Ascending aorta (tissue), 2 donors: ENCODE measurements at regions of chr12 and their contacts with region 1.

Region 1: GRCh38 chr12:50504798-50505385 is at the start of gene DIP2B:
- DNase-seq: peak; percentile 82 to 97
- H3K4me3 ChIP-seq: peak within 1 kb of the TSS; percentile 54 to 85
- H3K27ac ChIP-seq: peak within 1 kb of the TSS; percentile 86 to 92
- H3K4me1 ChIP-seq: peaks cover 2 to 22% of the 10 kb centered on the region in 2 donors
- H3K27me3 ChIP-seq: no peaks in the 10 kb centered on the region
- CTCF ChIP-seq: peak; percentile 87 to 98 (median 91)
- total RNA-seq, gene DIP2B: 8.5 TPM

Region 2: DNA sequence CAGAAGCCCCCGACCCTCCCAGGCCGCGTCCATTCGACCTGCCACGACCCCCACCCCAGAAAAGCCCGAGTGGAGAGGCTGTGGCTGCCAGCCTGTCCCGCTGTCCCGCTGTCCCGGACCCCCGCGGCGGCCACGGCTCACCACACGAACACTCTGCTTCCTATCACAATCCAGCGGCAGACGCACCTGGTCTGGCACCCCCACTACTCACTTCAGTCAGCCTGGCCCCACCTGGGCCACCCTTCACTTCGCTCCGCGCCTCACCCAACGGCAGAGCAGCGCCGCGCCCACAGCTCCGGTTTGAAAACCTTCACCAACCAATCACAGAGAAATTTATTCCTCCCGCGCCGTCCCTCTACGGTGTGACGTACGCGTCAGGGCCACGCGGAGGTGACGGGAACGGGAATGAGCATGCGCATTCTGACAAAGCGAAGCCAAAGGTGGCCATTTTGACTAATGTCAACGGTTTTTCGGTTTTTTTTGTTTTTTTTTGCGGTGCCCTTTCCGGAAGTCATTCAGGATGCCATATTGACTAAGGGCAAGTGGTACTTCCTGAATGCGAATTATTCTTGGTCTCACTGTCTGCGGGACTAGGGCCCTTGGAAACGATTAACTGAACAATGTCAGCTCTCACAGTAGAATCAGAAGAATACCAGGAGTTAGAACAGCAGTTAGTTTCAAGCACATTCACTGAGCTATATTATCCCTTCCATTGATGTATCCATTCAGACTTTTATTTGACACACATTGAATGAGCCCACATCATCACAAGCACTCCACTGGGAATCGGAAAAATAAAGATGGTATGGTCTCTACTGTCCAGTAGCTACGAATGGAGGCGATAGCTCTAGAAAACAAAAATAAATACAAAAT is 479.5 kb before region 1 on chr12 and contains the start of gene RACGAP1:
- intact Hi-C with region 1: loop called (anchors 1 kb)
- DNase-seq: peak; percentile 86 to 97
- H3K4me3 ChIP-seq: peak within 1 kb of the TSS; percentile 66 to 69
- H3K27ac ChIP-seq: peak within 1 kb of the TSS in 1 of 2 donors; percentile 13
- H3K4me1 ChIP-seq: no peaks in the 10 kb centered on the region
- H3K27me3 ChIP-seq: no peaks in the 10 kb centered on the region
- CTCF ChIP-seq: no peak
- total RNA-seq, gene RACGAP1: 5.1 TPM

Region 3: DNA sequence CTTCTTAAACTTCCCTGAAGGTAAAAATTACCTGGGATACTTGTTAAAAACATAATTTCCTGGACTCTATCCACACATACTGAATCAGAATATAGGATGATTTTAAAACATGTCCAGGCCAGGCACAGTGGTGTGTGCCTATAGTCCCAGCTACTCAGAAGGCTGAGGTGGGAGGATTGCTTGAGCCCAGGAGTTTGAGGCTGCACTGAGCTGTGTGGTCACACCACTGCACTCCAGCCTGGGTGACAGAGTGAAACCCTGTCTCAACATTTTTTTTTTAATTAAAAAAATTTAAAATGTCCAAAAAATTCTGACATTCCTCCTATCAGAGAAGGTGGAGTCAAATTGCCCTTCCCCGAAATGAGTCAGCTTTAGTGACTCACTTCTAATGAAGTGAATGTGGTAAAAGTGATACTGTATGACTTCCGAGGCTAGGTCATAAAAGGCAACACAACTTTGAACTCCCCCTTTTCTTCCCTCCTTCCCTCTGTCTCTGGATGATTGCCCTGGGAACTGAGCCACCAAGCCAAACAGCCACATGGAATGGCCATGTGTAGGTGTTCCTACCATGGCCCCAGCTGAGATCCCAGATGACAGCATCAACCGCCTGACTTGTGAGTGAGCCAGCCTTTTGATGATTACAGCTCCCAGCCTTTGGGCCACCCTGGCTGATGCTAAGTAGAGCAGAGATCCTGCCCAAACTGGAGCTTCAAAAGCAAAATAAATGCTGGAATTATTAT is 257.8 kb before region 1 on chr12:
- intact Hi-C with region 1: no loop called
- DNase-seq: peak; percentile 75 to 91
- H3K4me3 ChIP-seq: no peak overlapping the region
- H3K27ac ChIP-seq: peak overlapping the region; percentile 79 to 84
- H3K4me1 ChIP-seq: peaks cover 18 to 57% of the 10 kb centered on the region in 2 donors
- H3K27me3 ChIP-seq: no peaks in the 10 kb centered on the region
- CTCF ChIP-seq: no peak

Region 4: GRCh38 chr12:50302686-50303085 is 202.2 kb before region 1 on chr12:
- intact Hi-C with region 1: no loop called
- DNase-seq: no peak
- H3K4me3 ChIP-seq: no peak overlapping the region
- H3K27ac ChIP-seq: no peak overlapping the region
- H3K4me1 ChIP-seq: no peaks in the 10 kb centered on the region
- H3K27me3 ChIP-seq: no peaks in the 10 kb centered on the region
- CTCF ChIP-seq: no peak

Region 5: DNA sequence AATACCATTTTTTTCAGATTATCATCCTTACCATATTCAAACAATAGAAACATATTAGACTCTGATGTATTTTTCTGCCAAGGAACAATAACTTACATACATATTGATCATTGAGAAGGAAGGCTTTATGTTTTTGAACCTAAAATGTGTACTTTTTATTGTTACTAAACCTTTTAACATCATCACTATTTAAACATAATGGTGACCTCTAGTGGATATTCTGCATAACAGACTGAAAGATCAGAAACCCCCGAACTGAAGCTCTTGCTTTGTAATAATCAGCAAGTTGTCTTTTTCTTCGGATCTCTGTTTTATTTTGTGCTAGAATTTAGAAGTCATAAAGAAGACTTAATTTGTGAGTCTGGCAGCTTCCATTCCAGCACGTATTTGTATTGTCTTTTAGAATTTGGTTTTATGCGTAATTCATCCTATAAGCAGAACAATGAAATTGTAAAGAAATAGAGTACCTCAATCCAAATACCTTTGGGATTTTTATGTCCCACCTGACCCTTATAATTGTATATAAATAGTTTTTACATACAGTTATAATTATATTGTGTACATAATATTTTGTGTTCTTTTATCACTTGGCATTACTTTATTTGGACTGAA is 133.1 kb after region 1 on chr12:
- intact Hi-C with region 1: loop called (anchors 1 kb)
- DNase-seq: no peak
- H3K4me3 ChIP-seq: no peak overlapping the region
- H3K27ac ChIP-seq: no peak overlapping the region
- H3K4me1 ChIP-seq: peaks cover 0 to 3% of the 10 kb centered on the region in 2 donors
- H3K27me3 ChIP-seq: no peaks in the 10 kb centered on the region
- CTCF ChIP-seq: peak; percentile 19 to 66 (median 48)